Activated CD4-positive, alpha-beta memory T cell treated with anti-CD3 and anti-CD28 coated beads for 36 hours (primary cell): ENCODE measurements at regions of chr6 and their contacts with region 1.

Region 1: GRCh38 chr6:134822920-134823709 is 126.8 kb downstream of the ALDH8A1 start:
- DNase-seq: peak; percentile 29
- H3K4me3 Mint-ChIP-seq: no peak overlapping the region
- H3K27ac Mint-ChIP-seq: no peak overlapping the region
- H3K4me1 Mint-ChIP-seq: no peaks in the 10 kb centered on the region
- H3K27me3 Mint-ChIP-seq: peaks cover 3% of the 10 kb centered on the region

Region 2: GRCh38 chr6:134111062-134111677 is 711.9 kb before region 1 on chr6:
- CTCF ChIA-PET with region 1: interaction called, 33 read pairs
- POLR2A ChIA-PET with region 1: no interaction called
- intact Hi-C with region 1: loop called (anchors 1 kb)
- DNase-seq: peak; percentile 50
- H3K4me3 Mint-ChIP-seq: no peak overlapping the region
- H3K27ac Mint-ChIP-seq: no peak overlapping the region
- H3K4me1 Mint-ChIP-seq: no peaks in the 10 kb centered on the region
- H3K27me3 Mint-ChIP-seq: peaks cover 8% of the 10 kb centered on the region

Region 3: DNA sequence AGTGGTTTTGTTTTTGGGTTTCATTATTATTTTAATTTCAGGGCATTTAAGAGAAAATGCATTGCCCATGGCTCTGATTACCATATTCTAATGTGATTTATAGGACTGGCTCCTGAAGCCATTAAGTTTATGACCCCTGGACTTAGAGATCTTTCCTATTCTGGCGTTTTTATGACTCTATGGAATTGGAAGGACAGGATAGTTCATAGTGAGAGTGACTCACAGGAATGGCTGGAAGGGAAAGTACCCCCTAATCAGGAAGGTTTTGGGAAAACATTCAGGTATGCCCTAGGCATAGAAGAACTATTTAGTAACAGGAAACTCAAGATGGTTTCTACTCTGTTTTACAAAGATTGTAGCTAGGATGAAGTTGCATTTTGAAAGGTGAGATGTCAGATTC is 662.1 kb before region 1 on chr6:
- CTCF ChIA-PET with region 1: interaction called, 72 read pairs
- POLR2A ChIA-PET with region 1: no interaction called
- intact Hi-C with region 1: loop called (anchors 1 kb)
- DNase-seq: no peak
- H3K4me3 Mint-ChIP-seq: no peak overlapping the region
- H3K27ac Mint-ChIP-seq: no peak overlapping the region
- H3K4me1 Mint-ChIP-seq: peaks cover 4% of the 10 kb centered on the region
- H3K27me3 Mint-ChIP-seq: no peaks in the 10 kb centered on the region

Region 4: DNA sequence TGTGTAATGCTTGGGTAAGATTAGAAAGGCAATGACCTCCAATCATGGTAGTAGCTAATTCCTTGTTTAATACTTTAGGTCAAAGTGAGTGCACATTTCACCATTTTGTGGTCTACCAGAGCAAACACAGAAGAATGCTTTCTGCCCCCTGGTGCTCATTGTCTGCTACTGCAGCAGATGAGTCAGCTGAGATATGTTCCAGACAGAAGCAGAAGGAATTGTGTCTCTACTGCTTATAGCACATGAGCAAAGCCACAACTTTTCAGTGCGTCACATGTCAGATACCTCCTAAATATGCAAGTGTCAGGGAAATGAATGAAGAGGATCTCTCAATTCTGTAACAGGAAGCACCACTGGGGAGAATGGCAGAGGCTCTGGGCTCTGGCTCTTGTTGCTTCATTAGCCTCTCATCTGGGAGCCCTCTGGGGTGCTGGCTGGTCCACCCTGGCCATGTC is 182.1 kb before region 1 on chr6:
- CTCF ChIA-PET with region 1: interaction called, 7 read pairs
- POLR2A ChIA-PET with region 1: no interaction called
- intact Hi-C with region 1: loop called (anchors 1 kb)
- DNase-seq: peak; percentile 85
- H3K4me3 Mint-ChIP-seq: no peak overlapping the region
- H3K27ac Mint-ChIP-seq: no peak overlapping the region
- H3K4me1 Mint-ChIP-seq: peaks cover 32% of the 10 kb centered on the region
- H3K27me3 Mint-ChIP-seq: no peaks in the 10 kb centered on the region

Region 5: DNA sequence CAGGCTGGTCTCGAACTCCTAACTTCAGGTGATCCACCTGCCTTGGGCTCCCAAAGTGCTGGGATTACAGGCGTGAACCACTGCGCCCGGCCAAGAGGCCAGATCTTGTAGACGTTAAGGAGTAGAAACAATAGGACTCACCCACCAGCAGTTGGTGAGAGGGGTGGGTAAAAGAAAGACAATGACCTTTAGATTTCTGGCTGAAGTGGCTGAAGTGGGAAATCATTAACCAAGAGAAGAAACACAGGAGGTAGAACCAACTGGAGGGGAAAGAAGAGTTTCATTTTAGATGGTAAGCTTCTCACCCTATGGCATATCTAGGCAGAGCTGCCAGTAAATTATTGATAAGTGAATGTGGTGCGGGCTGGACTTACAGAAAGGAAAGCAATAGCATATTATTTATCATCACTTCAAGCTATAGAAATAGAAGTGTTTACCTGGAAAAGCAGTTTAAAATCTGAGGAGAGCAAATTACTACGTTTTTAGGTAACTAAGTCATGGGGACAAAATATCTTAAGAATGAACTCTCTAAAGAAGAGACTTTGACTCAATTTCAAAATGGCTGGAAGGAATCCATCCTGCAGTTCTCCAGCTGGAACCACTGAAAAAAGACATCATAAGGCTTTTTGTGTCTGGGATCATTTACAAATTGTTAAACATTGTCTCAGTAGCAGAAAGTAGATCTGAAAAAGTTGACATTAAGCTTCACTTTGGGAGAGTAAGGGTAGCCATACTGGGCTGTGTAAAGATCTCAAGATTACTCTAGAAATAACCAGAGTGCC is 17.2 kb after region 1 on chr6:
- CTCF ChIA-PET with region 1: interaction called, 15 read pairs
- POLR2A ChIA-PET with region 1: no interaction called
- intact Hi-C with region 1: no loop called
- DNase-seq: no peak
- H3K4me3 Mint-ChIP-seq: no peak overlapping the region
- H3K27ac Mint-ChIP-seq: no peak overlapping the region
- H3K4me1 Mint-ChIP-seq: no peaks in the 10 kb centered on the region
- H3K27me3 Mint-ChIP-seq: no peaks in the 10 kb centered on the region

Region 6: DNA sequence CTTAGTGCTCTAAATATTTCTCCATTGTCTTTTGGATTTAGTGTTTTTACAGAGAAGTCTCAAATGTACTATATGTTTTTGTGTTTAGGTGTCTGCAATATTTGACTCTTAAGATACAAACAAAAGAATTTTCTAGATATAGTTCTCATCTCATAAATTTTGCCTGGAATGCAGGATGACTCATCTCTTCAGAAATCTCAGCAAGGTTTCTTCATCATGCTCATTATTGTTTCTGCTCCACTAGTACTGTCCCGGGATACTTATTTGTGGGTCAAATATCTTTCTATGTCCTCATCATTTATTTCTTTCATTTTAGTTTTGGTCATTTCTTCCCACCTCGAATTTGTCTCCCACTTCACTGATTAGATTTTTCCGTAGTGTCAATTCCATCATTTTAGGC is 664.9 kb after region 1 on chr6:
- CTCF ChIA-PET with region 1: no interaction called
- POLR2A ChIA-PET with region 1: no interaction called
- intact Hi-C with region 1: no loop called
- DNase-seq: no peak
- H3K4me3 Mint-ChIP-seq: no peak overlapping the region
- H3K27ac Mint-ChIP-seq: no peak overlapping the region
- H3K4me1 Mint-ChIP-seq: no peaks in the 10 kb centered on the region
- H3K27me3 Mint-ChIP-seq: no peaks in the 10 kb centered on the region